Activated naive CD4-positive, alpha-beta T cell treated with anti-CD3 and anti-CD28 coated beads for 36 hours (primary cell): ENCODE measurements at regions of chr1 and their contacts with region 1.

Region 1: DNA sequence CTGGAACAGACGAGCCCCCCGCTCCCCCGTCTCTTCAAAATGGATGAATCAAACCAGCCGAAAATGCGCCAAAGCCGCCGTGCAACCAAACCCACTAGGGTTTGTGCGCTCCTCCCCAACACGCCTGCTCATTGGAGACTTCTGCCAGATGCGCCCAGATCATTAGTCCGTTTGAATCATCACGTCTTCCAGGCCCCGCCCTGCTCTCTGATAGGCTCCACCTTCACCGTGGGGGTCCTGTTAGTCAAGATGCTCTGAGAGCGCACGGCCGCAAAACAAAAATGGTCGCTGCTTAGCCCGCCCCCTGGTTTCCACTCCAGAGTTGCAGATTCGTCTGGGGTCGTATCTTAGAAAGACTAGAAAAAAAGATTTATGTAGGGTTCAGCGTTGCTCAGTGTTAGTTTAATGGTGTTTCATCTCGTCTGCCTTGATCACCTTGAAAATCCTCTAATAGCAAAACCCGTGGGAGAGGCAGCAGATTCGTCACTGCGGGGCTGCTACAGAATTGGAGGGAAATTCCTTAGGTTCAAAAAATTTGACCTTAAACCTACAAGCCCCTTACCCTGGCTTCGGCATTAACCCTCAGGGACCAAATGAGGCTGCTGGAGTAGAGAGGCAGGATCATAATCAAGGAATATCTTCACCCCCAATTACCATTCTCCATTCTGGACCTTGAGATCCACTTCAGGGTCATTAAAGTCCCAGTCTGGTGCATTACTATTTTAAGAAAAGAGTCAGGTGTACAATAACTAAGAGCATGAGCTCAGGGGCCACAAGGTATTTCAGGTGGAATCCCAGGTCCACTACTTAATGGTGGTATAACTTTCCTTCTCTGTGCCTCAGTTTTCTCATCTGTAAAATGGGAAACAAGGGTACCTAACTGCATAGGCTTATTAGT is at the start of gene NUCKS1:
- DNase-seq: peak; percentile 99
- H3K4me3 Mint-ChIP-seq: peak within 1 kb of the TSS; percentile 95
- H3K27ac Mint-ChIP-seq: peak within 1 kb of the TSS; percentile 100
- H3K4me1 Mint-ChIP-seq: peaks cover 30% of the 10 kb centered on the region
- H3K27me3 Mint-ChIP-seq: no peaks in the 10 kb centered on the region
- total RNA-seq, gene NUCKS1: 215 to 218 TPM

Region 2: GRCh38 chr1:205711104-205712020 is 39.0 kb before region 1 on chr1:
- CTCF ChIA-PET with region 1: interaction called, 6 read pairs
- intact Hi-C with region 1: loop called (anchors 2 kb)
- DNase-seq: peak; percentile 85
- H3K4me3 Mint-ChIP-seq: no peak overlapping the region
- H3K27ac Mint-ChIP-seq: peak overlapping the region; percentile 56
- H3K4me1 Mint-ChIP-seq: peaks cover 22% of the 10 kb centered on the region
- H3K27me3 Mint-ChIP-seq: no peaks in the 10 kb centered on the region

Region 3: DNA sequence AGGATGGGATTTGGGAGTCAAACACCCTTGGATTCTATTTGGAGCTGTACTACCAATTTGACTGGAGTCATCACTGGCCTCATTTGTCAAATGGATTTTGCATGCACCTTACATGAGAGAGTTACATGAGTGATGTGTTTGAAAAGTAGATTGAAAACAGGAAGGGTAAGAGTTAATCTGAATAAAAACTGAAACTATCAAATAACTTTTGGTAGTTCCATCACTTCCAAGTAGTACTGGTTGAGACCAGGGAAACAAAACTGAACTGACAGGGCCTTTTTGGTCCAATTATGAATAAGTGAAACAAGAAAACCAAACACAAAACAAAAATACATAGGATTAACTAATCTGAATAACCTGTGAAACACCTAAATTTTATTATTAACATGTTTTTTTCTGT is 30.6 kb before region 1 on chr1:
- CTCF ChIA-PET with region 1: interaction called, 6 read pairs
- intact Hi-C with region 1: loop called (anchors 2 kb)
- DNase-seq: no peak
- H3K4me3 Mint-ChIP-seq: no peak overlapping the region
- H3K27ac Mint-ChIP-seq: peak overlapping the region; percentile 67
- H3K4me1 Mint-ChIP-seq: peaks cover 42% of the 10 kb centered on the region
- H3K27me3 Mint-ChIP-seq: no peaks in the 10 kb centered on the region

Region 4: DNA sequence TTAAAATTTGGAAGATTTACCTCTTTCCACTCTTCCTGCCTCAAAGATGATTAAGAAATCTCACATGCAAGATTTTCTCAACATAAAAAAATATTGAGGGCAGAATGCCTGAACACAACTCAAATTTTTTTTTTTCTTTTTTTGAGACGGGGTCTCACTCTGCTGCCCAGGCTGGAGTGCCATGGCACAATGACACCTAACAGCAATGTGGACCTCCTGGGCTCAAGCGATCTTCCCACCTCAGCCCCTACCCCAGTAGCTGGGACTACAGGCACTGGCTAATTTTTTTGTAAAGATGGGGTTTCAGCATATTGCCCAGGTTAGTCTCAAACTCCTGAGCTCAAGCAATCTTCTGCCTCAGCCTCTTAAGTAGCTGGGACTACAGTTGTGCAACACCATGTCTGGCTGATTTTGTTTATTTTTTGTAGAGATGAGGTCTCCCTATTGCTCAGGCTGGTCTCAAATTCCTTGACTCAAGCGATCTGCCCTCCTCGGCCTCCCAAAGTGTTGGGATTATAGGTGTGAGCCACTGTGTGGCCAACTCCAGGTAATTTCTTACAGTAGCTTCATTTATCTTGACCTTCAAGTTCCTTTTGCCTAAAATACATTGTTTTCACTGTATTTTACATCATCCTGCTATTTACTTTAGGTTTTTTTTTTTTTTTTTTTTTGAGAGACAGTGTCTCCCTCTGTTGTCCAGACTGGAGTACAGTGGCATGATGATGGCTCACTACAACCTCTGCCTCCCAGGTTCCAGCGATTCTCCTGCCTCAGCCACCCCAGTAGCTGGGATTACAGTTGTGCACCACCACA is 10.8 kb before region 1 on chr1:
- CTCF ChIA-PET with region 1: interaction called, 3 read pairs
- intact Hi-C with region 1: loop called (anchors 1 kb)
- DNase-seq: no peak
- H3K4me3 Mint-ChIP-seq: no peak overlapping the region
- H3K27ac Mint-ChIP-seq: peak overlapping the region; percentile 24
- H3K4me1 Mint-ChIP-seq: peaks cover 47% of the 10 kb centered on the region
- H3K27me3 Mint-ChIP-seq: no peaks in the 10 kb centered on the region

Region 5: GRCh38 chr1:205812878-205813754 is 62.7 kb after region 1 on chr1 and contains the start of gene SLC41A1:
- CTCF ChIA-PET with region 1: no interaction called
- intact Hi-C with region 1: loop called (anchors 1 kb)
- DNase-seq: peak; percentile 95
- H3K4me3 Mint-ChIP-seq: peak within 1 kb of the TSS; percentile 89
- H3K27ac Mint-ChIP-seq: peak within 1 kb of the TSS; percentile 74
- H3K4me1 Mint-ChIP-seq: peaks cover 49% of the 10 kb centered on the region
- H3K27me3 Mint-ChIP-seq: no peaks in the 10 kb centered on the region
- total RNA-seq, gene SLC41A1: 32.1 to 33.9 TPM

Region 6: DNA sequence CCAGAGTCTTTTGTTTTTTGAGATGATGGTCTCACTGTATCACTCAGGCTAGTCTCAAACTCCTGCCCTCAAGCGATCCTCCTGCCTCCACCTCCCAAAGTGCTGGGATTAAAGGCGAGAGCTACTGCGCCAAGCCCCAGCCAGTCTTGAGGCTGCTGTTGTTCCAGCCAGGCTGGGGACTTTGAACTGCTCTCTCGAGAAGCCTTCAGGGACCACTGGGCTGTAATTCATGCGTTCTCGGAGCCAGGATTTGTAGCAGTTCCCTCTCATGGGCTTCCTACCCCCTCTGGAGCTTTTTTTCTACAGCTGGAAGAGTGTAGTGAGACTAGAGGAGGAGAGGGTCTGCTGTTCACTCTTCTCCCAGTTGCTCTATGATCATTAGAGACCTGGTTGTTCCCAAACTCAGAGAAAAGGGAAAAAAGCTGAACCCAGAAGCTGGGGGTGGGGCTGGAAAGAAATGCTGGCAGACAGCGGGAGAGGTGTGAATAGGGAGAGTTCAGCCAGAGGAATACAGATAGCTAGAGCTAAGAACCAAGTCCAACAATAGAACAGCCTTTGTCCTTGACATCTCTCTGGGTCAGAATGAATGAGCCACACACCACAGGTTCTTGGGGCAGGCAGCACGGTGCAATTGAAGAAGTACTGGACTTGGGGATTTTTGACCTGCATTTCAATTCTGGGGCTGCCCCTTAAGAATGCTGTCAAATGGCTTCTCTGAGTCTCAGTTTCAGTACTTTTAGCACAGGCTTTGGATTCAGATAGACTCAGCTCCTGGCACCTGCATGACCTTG is 75.8 kb after region 1 on chr1:
- CTCF ChIA-PET with region 1: no interaction called
- intact Hi-C with region 1: no loop called
- DNase-seq: peak; percentile 30
- H3K4me3 Mint-ChIP-seq: no peak overlapping the region
- H3K27ac Mint-ChIP-seq: no peak overlapping the region
- H3K4me1 Mint-ChIP-seq: peaks cover 22% of the 10 kb centered on the region
- H3K27me3 Mint-ChIP-seq: peaks cover 3% of the 10 kb centered on the region

Region 7: DNA sequence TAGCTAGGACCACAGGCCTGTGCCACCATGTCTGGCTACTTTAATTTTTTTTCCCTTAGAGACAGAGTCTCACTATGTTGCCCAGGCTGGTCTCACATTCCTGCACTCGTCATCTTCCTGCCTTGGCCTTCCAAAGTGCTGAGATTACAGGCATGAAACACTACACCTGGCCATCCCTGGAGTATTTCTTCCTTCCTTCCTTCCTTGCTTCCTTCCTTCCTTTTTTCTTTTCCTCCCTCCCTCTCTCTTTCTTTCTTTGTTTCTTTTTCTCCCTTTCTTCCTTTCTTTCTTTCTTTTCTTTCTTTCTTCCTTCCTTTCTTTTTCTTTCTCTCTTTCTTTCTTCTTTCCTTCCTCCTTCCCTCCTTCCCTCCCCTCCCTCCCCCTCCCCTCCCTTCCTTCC is 145.9 kb after region 1 on chr1:
- CTCF ChIA-PET with region 1: no interaction called
- intact Hi-C with region 1: no loop called
- DNase-seq: no peak
- H3K4me3 Mint-ChIP-seq: no peak overlapping the region
- H3K27ac Mint-ChIP-seq: no peak overlapping the region
- H3K4me1 Mint-ChIP-seq: peaks cover 2% of the 10 kb centered on the region
- H3K27me3 Mint-ChIP-seq: peaks cover 11% of the 10 kb centered on the region